ENCODE measurements at regions of chr3 and their contacts with region 1.

Region 1: DNA sequence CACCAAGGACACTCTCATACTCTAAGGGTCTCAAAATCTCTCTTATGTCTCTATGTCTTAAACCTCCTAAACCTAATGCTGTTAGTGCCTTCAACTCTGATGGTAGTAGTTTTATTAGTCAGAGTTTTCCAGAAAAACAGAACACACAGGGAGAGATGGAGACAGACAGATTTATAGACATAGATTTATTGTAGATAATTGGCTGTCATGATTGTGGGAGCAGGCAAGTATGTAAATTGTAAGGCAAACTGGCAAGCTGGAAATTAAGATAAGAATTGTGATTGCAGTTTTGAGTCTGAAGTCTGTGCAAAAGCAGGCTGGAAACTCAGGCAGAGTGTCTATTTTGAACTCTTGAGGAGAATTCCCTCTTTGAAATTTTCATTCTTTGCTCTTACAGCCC is 96.3 kb upstream of the ROBO1 start:
- DNase-seq: no peak
- ATAC-seq: no peak
- H3K4me3 ChIP-seq: no peak overlapping the region
- H3K27ac ChIP-seq: no peak overlapping the region
- H3K4me1 ChIP-seq: no peaks in the 10 kb centered on the region
- H3K27me3 ChIP-seq: no peaks in the 10 kb centered on the region
- CTCF ChIP-seq: no peak

Region 2: DNA sequence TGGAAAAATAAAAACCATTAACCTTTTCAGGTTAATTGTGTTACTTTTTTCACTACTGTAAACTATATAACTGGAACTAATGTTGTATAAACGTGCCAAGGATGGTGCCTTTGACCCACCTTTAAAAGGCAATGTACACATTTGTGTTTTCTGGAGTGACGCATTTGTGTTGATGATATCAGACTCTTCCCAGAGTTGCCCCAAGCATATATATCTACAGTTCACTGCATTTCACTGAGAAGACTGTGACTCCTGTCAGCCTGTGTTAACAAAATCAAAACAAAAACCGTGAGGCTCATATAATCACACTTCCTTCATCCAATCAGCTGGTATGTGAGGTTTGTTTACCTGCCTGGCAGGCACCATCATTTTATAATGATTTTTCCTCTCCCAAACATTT is 21.3 kb after region 1 on chr3:
- CTCF ChIA-PET with region 1: no interaction called
- POLR2A ChIA-PET with region 1: no interaction called
- intact Hi-C with region 1: loop called (anchors 1 kb)
- DNase-seq: no peak
- ATAC-seq: no peak
- H3K4me3 ChIP-seq: no peak overlapping the region
- H3K27ac ChIP-seq: no peak overlapping the region
- H3K4me1 ChIP-seq: no peaks in the 10 kb centered on the region
- H3K27me3 ChIP-seq: no peaks in the 10 kb centered on the region
- CTCF ChIP-seq: no peak

Region 3: GRCh38 chr3:79954756-79955155 is 90.7 kb after region 1 on chr3:
- CTCF ChIA-PET with region 1: no interaction called
- POLR2A ChIA-PET with region 1: no interaction called
- intact Hi-C with region 1: no loop called
- DNase-seq: no peak
- ATAC-seq: no peak
- H3K4me3 ChIP-seq: no peak overlapping the region
- H3K27ac ChIP-seq: no peak overlapping the region
- H3K4me1 ChIP-seq: no peaks in the 10 kb centered on the region
- H3K27me3 ChIP-seq: no peaks in the 10 kb centered on the region
- CTCF ChIP-seq: no peak

Region 4: GRCh38 chr3:80060664-80061063 is 196.6 kb after region 1 on chr3:
- CTCF ChIA-PET with region 1: no interaction called
- POLR2A ChIA-PET with region 1: no interaction called
- intact Hi-C with region 1: no loop called
- DNase-seq: peak; percentile 46
- ATAC-seq: peak; percentile 45; the same call in 1 of the 2 replicates
- H3K4me3 ChIP-seq: no peak overlapping the region
- H3K27ac ChIP-seq: no peak overlapping the region
- H3K4me1 ChIP-seq: no peaks in the 10 kb centered on the region
- H3K27me3 ChIP-seq: no peaks in the 10 kb centered on the region
- CTCF ChIP-seq: peak; percentile 49

Measured in PC-3 (cell line).